ENCODE measurements at regions of chr4 and their contacts with region 1.

Region 1: GRCh38 chr4:17605236-17605635 is 9.2 kb upstream of the MED28 start:
- DNase-seq: no peak

Region 2: GRCh38 chr4:17324386-17324830 is 280.8 kb before region 1 on chr4:
- in situ Hi-C with region 1: no loop called
- DNase-seq: peak; percentile 8

Region 3: GRCh38 chr4:17385403-17385802 is 219.8 kb before region 1 on chr4:
- in situ Hi-C with region 1: no loop called
- DNase-seq: no peak

Region 4: DNA sequence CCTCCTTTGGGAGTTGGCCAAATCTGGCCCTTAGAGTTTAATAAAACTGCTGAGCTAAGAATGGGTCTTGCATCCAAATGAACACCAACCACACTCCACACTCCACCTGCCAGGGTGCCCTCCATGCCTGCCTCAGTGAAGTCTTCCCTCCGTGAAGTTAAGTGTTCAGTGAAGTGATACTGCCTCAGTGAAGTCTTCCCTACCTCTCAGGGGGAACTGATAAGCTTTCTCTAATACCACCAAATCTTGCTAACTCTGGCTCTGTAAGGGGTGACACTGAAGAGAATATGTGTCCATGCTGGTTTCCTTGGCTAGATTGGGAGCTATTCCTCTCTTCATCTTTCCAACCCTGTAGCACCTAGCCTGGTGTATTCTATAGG is 37.2 kb after region 1 on chr4:
- in situ Hi-C with region 1: loop called (anchors 5 kb)
- DNase-seq: no peak